Common myeloid progenitor, CD34-positive (primary cell): ENCODE measurements at regions of chr5 and their contacts with region 1.

Region 1: GRCh38 chr5:95664204-95664786 is 17.7 kb downstream of the RFESD start:
- DNase-seq: peak; percentile 38 to 68 (median 52)
- H3K4me3 ChIP-seq: no peak overlapping the region
- H3K27ac ChIP-seq: no peak overlapping the region
- H3K4me1 ChIP-seq: peaks cover 0 to 25% (median 14%) of the 10 kb centered on the region in 4 experiments
- H3K27me3 ChIP-seq: no peaks in the 10 kb centered on the region

Region 2: DNA sequence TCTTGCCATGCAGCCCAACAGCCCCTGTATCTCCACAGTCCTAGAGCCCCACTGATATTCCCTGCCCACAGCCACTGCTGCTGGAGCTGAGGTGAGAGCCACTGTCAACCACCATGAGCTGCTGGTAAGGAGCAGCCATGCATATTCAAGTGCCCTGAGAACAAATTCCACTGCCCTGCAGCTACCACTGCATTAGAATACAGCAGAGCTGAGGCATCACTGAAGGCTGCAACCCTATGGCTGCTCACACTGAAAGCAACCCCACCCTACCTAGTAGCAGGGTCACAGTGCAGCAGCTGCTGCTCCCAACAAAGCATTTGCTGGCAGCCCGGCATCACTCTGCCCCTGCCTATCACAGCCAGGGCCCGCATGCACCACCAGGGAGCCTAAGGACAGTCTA is 178.1 kb before region 1 on chr5:
- CTCF ChIA-PET with region 1: no interaction called
- POLR2A ChIA-PET with region 1: no interaction called
- DNase-seq: no peak
- H3K4me3 ChIP-seq: no peak overlapping the region
- H3K27ac ChIP-seq: no peak overlapping the region
- H3K4me1 ChIP-seq: no peaks in the 10 kb centered on the region
- H3K27me3 ChIP-seq: no peaks in the 10 kb centered on the region

Region 3: DNA sequence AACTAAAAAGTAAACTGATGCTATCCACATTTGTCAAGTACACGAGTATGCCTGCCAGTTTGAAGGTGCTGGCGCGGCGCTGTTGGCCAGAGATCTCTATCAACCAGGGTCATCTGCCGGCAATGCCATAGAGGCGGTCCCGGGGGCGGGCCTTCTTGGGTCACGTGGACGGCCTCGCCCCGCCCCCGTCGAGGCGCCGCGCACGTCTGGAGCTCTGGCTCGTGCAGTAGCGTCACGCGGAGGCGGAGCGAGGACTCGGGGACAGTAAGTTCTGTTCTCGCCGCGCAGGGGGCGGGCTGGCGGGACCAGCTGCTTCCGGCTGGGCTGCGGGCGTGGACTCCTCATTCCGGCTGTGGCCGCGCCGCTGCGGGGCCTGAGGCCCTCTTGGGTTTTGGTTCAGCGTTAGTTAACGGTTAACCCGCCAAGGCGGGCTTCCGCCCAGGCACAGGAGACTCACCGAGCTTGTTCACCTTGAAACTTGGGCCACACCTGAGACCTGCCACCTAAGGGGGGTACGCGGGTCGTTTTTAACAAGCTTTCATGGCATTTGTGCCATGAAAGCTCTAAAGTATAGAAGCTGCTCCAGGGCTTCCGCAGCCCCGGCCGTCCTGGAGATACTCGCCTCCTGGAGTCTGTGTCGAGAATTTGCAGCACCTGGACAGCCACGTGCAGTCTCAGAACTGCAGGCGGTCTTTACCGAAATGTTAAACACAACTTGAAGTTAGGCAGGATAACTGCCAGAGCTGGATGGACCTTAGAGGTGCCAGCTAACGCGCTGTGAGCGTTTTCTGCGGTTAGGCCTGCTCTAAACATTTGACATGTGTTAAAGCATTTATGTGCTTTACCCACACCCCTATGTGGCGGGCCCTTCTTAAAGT is 17.5 kb before region 1 on chr5 and contains the start of gene RFESD:
- CTCF ChIA-PET with region 1: interaction called, 21 read pairs
- POLR2A ChIA-PET with region 1: no interaction called
- DNase-seq: peak; percentile 97 to 99 (median 99)
- H3K4me3 ChIP-seq: peak within 1 kb of the TSS; percentile 13 to 76 (median 63)
- H3K27ac ChIP-seq: peak within 1 kb of the TSS; percentile 60 to 83
- H3K4me1 ChIP-seq: peaks cover 12 to 31% (median 20%) of the 10 kb centered on the region in 4 experiments
- H3K27me3 ChIP-seq: no peaks in the 10 kb centered on the region

Region 4: DNA sequence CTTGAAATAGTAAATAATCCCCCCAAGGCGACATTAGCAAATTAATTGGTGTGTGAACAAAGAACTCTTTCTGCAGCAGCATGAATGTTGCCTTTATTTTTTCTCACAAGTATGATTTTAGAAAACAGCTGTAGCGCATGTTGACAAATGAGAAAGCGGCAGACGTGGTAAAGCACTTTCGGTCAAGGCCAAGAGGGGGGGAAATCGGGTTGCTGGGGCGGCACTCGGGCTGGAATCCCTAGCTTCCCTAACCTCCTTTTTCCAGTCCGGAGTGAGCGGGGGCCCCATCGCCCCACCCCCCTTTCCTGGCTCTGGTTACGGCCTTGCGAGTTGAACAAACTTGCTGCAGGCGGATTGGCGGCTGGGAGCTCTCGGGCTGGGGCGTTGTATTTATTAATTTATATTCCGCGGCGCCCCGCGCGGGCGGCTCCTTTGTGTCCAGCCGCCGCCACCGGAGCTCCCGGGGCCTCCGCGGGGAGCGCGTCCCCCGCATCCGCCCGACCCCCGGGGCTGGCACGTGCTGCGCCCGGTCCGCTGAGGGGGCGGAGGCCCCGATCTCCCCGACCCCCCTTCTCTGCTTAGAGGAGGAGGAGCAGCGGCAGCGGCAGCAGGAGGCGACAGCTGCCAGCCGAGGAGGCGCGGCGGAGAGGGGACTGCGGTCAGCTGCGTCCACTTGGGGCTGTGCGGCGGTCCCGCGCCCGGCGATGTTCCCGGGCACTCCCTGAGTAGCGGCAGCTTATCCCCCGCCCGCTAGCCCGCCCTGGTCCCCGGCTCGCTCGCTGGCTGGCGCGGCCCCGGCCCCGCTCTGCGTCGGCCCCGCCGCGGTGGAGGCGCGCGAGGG is 66.7 kb after region 1 on chr5 and contains the start of gene RHOBTB3:
- CTCF ChIA-PET with region 1: interaction called, 13 read pairs
- POLR2A ChIA-PET with region 1: no interaction called
- DNase-seq: peak; percentile 61 to 87 (median 77)
- H3K4me3 ChIP-seq: peak within 1 kb of the TSS; percentile 69 to 96 (median 86)
- H3K27ac ChIP-seq: peak within 1 kb of the TSS; percentile 44 to 84
- H3K4me1 ChIP-seq: peaks cover 14 to 41% (median 25%) of the 10 kb centered on the region in 4 experiments
- H3K27me3 ChIP-seq: no peaks in the 10 kb centered on the region

Region 5: DNA sequence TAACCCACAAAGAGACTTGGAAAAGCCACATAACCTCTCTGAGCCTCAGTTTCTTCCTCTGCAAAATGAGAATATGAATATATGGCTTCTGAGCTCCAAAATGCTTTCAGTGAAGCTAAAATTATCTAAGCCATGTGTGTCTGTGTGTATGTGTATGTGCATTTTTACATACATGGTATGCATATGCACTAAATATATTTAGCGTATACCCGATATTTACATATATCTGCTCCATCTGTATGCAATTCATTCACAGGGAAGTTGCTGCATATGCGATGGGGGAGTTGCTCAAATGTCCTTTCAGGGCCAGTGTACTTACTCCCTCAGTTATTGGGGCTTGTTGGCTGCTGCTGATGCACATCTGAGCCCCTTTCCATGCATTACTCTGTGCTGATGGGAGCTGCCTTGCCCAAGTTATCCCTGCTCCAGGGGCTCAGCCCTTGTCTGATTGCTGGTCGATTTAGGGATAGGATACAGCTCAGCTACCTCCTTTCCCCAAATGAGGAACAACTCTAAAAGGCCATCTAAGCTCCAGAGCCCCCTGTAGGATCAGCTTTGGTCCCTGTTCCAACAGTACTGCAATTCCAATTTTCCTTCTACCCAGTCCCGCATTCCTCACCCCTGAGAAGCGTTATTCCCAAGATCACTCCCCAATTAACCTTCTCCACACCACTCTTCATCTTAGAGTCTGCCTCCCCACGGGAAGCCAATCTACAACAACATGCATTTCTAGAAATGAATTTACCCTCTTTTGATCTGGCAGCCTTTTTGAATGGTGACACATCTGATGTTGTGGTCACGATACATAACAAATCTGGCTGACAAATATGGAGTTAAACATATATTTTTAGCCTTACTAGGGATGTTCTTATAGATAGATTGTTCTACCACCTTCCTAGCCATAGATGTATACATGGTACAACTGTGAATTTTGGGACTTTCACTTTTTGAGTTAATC is 82.7 kb after region 1 on chr5:
- CTCF ChIA-PET with region 1: interaction called, 11 read pairs
- POLR2A ChIA-PET with region 1: no interaction called
- DNase-seq: no peak
- H3K4me3 ChIP-seq: no peak overlapping the region
- H3K27ac ChIP-seq: no peak overlapping the region
- H3K4me1 ChIP-seq: no peaks in the 10 kb centered on the region
- H3K27me3 ChIP-seq: no peaks in the 10 kb centered on the region

Region 6: GRCh38 chr5:96037128-96037527 is 372.8 kb after region 1 on chr5:
- CTCF ChIA-PET with region 1: no interaction called
- POLR2A ChIA-PET with region 1: no interaction called
- DNase-seq: no peak
- H3K4me3 ChIP-seq: no peak overlapping the region
- H3K27ac ChIP-seq: no peak overlapping the region
- H3K4me1 ChIP-seq: no peaks in the 10 kb centered on the region
- H3K27me3 ChIP-seq: no peaks in the 10 kb centered on the region